ENCODE measurements at regions of chr6 and their contacts with region 1.

Region 1: DNA sequence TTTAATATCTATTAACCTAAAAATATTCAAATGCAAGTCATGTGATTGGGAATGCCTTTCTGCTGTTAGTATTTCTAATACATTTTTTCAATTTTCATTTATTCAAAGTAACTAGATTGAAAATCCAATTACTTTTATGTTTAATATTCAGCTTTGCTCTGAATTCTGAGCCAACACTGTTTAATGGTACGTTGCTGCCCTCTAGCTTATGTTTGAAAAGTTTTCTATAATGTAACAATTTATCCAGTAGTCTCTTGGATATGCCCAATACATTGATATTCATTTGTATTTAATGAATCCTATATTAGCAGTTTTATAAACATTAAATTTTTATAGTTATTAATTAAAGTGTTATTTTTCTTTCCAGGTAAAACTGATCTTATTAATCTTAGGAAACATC is 47.4 kb downstream of the LGSN start:
- DNase-seq: no peak

Region 2: GRCh38 chr6:61809004-61809595 is 1463.3 kb before region 1 on chr6:
- intact Hi-C with region 1: loop called (anchors 10 kb)
- DNase-seq: no peak

Region 3: GRCh38 chr6:62285612-62286469 is 986.6 kb before region 1 on chr6 and contains the start of gene KHDRBS2:
- intact Hi-C with region 1: loop called (anchors 10 kb)
- DNase-seq: peak; percentile 93 to 100 (median 97)

Region 4: GRCh38 chr6:62746968-62747367 is 525.4 kb before region 1 on chr6:
- intact Hi-C with region 1: loop called (anchors 10 kb)
- DNase-seq: peak in 3 of 10 donors; percentile 6 to 71 (median 35)

Region 5: DNA sequence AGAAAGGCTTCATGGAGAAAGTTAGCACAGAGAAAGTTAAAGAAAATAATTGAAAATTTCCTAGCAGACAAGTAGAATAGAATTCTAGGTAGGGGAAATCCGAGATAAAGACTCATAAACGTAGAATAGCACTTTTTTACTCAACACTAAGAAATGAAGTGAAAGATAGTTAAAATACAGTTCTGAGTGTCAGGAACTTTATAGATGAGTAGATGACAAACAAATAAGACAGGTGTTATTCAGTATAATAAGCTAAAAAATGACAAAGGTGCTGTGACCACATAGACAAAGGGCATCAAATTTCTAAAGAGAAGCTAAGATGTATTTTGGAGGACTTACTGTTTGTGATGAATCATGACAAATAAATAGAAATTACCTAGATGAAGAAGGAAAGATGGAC is 48.2 kb before region 1 on chr6:
- intact Hi-C with region 1: no loop called
- DNase-seq: no peak

Measured in posterior cingulate gyrus (tissue), 11 donors.